Psoas muscle (tissue), 8 donors: ENCODE measurements at regions of chr5 and their contacts with region 1.

Region 1: DNA sequence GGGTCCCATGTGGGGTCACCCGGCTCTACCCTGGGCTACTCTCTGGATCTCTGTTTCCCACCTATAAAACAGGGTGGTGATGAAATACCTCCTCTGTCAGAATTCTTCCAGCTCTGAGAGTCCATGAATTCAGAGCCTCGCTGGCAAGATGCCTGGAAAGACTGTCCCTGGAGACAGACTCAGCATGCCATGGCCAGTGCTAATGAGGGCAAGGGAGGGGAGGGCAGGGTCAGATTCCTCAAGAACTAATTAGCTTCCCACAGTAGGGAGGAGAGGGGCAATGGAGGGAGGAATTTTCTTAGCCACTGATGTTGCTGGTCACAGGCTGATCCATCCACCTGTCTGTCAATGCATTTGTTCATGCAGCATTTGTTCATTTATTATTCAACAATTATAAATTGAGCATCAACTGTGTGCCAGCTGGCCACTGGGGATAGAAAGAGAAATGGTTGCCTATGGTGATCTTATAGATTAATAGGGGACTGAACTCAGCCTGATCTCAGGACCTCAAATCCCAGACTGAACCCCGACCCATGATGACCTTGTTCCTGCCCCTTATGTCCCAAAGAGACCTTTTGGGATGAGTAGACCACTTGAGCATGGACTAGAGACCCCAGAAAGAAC is 4.7 kb downstream of the SYNPO start:
- DNase-seq: peak; percentile 76 to 87
- ATAC-seq: peak in 2 of 4 donors; percentile 15 to 16
- H3K4me3 ChIP-seq: no peak overlapping the region
- H3K27ac ChIP-seq: peak overlapping the region; percentile 89
- H3K4me1 ChIP-seq: peaks cover 93% of the 10 kb centered on the region
- H3K27me3 ChIP-seq: no peaks in the 10 kb centered on the region
- CTCF ChIP-seq: no peak

Region 2: DNA sequence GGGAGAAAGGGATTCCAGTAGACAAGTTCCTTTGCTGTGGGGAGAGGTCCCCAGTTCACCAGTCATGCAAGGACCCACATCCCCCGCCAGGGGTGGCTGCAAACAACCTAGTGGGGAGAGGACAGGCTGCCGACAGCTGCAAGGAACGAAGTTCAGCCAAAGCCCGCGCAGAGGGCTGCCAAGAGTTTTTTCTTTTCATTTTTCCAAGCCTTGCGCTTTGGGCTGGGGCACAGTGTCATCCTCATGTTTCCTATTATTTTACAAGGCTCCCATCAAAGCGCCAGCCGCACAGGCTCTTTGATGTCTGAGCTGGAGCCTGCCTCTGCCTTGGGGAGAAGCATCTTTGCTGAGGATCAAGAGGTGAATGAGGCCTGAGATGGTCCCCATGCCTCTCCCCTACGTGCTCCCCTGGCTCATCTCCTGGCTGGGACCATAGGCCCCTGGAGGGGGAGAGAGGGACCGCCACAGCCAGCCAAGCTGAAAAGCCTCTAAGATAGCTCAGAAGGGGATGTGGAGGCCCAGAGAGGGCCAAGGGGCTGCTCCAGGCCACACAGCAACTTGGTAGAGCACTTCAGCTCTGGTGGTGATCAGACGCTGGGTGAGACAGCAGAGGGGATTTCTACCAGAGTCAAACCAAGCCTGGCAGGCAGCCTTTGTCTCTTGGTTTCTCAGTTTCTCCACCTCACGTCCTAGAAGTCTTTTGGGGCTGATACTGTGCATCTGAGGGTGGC is 55.2 kb before region 1 on chr5:
- intact Hi-C with region 1: loop called (anchors 5 kb)
- DNase-seq: peak; percentile 80 to 90
- ATAC-seq: peak; percentile 74 to 93 (median 88)
- H3K4me3 ChIP-seq: no peak overlapping the region
- H3K27ac ChIP-seq: peak overlapping the region; percentile 56
- H3K4me1 ChIP-seq: peaks cover 48% of the 10 kb centered on the region
- H3K27me3 ChIP-seq: no peaks in the 10 kb centered on the region
- CTCF ChIP-seq: peak; percentile 77